Left cardiac atrium (tissue), 4 donors: ENCODE measurements at regions of chr16 and their contacts with region 1.

Region 1: DNA sequence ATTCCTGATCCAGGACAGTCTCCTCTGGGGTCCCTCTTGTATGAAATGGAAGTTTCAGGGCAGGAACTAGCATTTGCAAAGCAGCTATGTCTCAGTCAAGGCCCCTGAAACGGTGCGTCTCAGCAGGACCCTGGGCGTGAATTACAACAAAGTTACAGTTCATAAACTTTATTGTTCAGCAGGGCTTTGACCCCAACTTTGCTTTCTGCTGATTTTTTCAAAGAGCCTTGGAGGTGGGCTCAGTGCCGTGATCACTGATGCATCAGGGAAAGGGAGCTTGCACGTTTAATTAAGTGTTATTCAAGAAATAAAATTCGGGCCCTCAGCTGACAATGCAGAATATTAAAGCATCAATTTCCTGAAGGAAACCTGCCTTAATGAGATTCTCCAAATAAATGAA is 260.1 kb upstream of the C16orf82 start:
- DNase-seq: no peak
- ATAC-seq: no peak

Region 2: DNA sequence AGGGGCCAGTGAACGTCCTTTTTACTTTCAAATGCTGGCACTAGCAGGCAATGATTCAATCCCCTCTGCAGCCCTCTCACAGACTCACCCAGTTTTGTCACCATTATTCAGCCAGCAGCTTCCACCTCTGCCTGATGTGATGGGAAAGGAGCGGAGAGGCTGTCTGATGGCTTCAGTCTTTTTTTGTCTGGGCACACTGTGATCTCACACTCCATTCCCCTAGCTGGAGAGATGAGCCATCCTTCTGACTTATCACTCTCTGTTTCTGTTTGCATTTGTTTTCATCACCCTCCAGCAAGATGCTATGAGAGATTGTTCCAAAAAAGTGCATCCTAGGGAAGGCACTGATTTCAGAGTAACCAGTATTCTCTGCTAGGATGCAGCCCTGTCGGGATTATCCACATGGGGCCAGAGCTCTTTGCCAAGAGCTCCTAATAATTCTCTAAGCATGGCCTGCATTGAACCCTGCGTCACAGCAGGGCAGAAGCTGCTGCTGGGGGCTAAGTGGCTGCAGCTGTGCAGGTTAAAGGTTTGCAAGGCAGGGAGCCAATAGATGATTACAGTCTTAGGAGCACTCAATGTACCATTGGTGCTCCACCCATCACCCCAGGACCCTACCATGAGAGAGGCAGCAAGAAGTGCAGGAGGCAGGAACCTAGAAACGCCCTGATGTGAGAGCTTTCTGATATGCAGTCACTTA is 23.9 kb after region 1 on chr16:
- intact Hi-C with region 1: loop called in 1 of 2 experiments (anchors 2 kb)
- DNase-seq: no peak
- ATAC-seq: no peak